Naive thymus-derived CD4-positive, alpha-beta T cell (primary cell): ENCODE measurements at regions of chr16 and their contacts with region 1.

Region 1: DNA sequence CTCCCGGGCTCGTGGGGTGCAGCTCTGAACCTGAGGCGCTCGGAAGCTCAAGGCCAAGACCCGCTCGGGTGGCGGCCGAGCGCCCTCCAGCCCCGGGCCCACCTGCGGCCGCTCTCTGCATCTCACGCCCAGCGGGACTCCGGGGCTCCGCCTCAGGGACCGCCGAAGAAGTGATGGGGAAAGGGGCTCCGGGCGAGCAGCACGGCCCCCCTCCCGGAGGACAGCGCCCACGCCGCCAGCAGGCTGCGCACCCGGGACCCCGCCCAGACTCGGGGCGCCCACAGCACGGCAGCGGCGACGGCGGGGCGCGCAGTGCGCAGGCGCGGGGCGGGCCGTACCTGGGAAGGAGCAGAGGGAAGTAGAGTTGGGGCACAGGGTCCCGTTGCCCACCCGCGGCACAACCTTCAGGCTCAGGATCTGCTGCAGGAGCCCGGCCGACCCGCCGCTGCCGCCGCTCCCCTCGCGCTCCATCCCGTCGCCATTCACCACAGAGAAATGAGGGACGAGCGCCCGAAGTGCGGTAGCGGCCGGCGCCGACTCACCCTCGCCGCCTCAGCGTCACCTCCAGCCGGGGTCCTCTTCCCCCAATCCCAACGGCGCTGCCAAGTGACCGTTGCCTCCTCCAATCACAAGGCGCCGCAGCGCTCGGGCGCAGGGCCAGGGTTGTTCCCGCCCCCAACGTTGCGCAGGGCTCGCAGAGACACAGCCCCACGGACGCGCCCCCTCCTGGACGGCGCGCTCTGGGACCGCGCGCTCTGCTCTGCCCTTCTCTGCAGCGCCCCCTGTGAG is at the start of gene TMEM170A:
- DNase-seq: peak; percentile 96 to 99 (median 99)
- ATAC-seq: peak; percentile 95
- H3K4me3 ChIP-seq: peak within 1 kb of the TSS; percentile 93
- H3K4me3 Mint-ChIP-seq: peak within 1 kb of the TSS; percentile 86 to 98 (median 93)
- H3K27ac ChIP-seq: peak within 1 kb of the TSS; percentile 93
- H3K27ac Mint-ChIP-seq: peak within 1 kb of the TSS; percentile 75 to 97 (median 93)
- H3K4me1 ChIP-seq: peaks cover 26 to 31% of the 10 kb centered on the region in 2 donors
- H3K4me1 Mint-ChIP-seq: peaks cover 31 to 49% (median 44%) of the 10 kb centered on the region in 7 donors
- H3K27me3 ChIP-seq: no peaks in the 10 kb centered on the region
- H3K27me3 Mint-ChIP-seq: peaks cover 0 to 5% (median 0%) of the 10 kb centered on the region in 5 donors
- total RNA-seq, gene TMEM170A: 31.0 to 50.9 (median 46.6) TPM

Region 2: DNA sequence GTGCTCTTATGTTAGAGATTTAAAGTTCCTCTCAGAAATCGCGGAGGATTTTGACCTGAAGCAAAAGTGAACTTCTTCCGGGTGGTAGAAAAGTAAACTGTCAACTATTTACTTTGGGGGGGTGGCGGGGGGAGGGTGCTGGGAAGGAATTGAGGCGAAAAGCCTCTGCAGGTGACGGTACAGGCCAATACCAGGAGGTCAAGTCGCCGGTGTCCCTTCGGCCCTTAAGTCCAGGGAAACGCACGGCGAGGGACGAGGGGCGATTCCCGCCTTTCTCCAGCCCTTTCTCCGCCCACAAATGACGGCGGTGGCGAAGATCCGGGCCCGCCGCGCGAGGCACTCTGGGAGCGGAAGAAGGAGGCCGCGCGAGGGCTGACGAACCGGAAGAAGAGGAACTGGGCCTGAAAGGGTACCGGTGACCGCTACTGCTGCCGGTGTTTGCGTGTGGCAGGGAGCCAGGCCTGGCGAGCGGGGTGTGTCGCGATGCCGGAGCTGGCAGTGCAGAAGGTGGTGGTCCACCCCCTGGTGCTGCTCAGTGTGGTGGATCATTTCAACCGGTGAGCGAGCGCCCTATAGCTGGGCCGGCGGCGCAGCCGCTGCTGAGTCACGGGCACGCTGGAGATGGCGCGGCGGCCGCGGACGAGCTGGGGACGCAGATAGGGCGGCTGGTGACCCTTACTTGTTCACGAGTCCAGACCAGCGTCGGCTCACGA is 1167.7 kb before region 1 on chr16 and contains the start of gene PSMD7:
- CTCF ChIA-PET with region 1: no interaction called
- POLR2A ChIA-PET with region 1: no interaction called
- intact Hi-C with region 1: loop called (anchors 1 to 5 kb)
- DNase-seq: peak; percentile 82 to 93 (median 90)
- ATAC-seq: peak; percentile 96
- H3K4me3 ChIP-seq: peak within 1 kb of the TSS; percentile 86
- H3K4me3 Mint-ChIP-seq: peak within 1 kb of the TSS; percentile 89 to 99 (median 96)
- H3K27ac ChIP-seq: peak within 1 kb of the TSS; percentile 96
- H3K27ac Mint-ChIP-seq: peak within 1 kb of the TSS; percentile 93 to 100 (median 98)
- H3K4me1 ChIP-seq: peaks cover 22 to 25% of the 10 kb centered on the region in 2 donors
- H3K4me1 Mint-ChIP-seq: peaks cover 21 to 52% (median 38%) of the 10 kb centered on the region in 7 donors
- H3K27me3 ChIP-seq: no peaks in the 10 kb centered on the region
- H3K27me3 Mint-ChIP-seq: no peaks in the 10 kb centered on the region
- total RNA-seq, gene PSMD7: 61.1 to 107 (median 71.3) TPM

Region 3: DNA sequence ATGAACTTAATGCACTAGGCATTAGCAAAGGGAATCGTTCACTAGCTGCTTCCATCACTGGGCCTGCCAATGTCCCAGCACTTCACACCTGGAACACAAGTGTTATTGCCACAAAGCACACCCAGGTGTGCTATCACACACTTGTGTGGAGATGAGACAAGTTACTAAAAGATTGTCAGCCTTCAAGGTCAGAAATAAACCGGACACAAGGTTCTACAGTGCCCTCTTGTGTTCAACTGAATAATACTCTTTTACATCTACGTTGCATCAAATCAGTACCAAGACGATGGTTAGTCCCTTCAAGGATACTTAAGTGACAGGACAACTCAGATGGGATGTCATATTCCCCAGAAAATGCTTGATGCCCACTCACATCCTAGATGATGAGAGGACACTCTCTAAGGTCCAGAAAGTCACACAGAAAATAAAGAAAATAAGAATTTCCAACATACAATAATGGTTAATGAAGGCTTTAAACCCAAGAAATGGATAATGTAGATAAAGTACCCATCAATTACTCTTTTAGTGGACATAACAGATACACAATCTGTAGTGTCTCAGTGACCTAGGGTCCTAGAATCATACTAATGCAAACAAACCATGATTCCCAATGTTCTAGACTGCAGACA is 841.0 kb before region 1 on chr16:
- CTCF ChIA-PET with region 1: no interaction called
- POLR2A ChIA-PET with region 1: no interaction called
- intact Hi-C with region 1: no loop called
- DNase-seq: peak in 6 of 9 donors; percentile 29 to 59 (median 53)
- ATAC-seq: peak; percentile 78
- H3K4me3 ChIP-seq: no peak overlapping the region
- H3K4me3 Mint-ChIP-seq: no peak overlapping the region
- H3K27ac ChIP-seq: no peak overlapping the region
- H3K27ac Mint-ChIP-seq: peak overlapping the region in 5 of 9 donors; percentile 20 to 78 (median 49)
- H3K4me1 ChIP-seq: no peaks in the 10 kb centered on the region
- H3K4me1 Mint-ChIP-seq: peaks cover 5 to 18% (median 9%) of the 10 kb centered on the region in 7 donors
- H3K27me3 ChIP-seq: no peaks in the 10 kb centered on the region
- H3K27me3 Mint-ChIP-seq: no peaks in the 10 kb centered on the region

Region 4: GRCh38 chr16:75148311-75149195 is 315.8 kb before region 1 on chr16 and contains the start of gene ZFP1:
- CTCF ChIA-PET with region 1: no interaction called
- POLR2A ChIA-PET with region 1: no interaction called
- intact Hi-C with region 1: loop called in 1 of 2 experiments (anchors 1 kb)
- DNase-seq: peak; percentile 91 to 98 (median 95)
- ATAC-seq: peak; percentile 93
- H3K4me3 ChIP-seq: peak within 1 kb of the TSS; percentile 98
- H3K4me3 Mint-ChIP-seq: peak within 1 kb of the TSS; percentile 85 to 92 (median 89)
- H3K27ac ChIP-seq: peak within 1 kb of the TSS; percentile 89
- H3K27ac Mint-ChIP-seq: peak within 1 kb of the TSS; percentile 66 to 90 (median 86)
- H3K4me1 ChIP-seq: peaks cover 0 to 6% of the 10 kb centered on the region in 2 donors
- H3K4me1 Mint-ChIP-seq: peaks cover 13 to 31% (median 27%) of the 10 kb centered on the region in 7 donors
- H3K27me3 ChIP-seq: no peaks in the 10 kb centered on the region
- H3K27me3 Mint-ChIP-seq: no peaks in the 10 kb centered on the region
- total RNA-seq, gene ZFP1: 8.6 to 13.4 (median 10.1) TPM

Region 5: GRCh38 chr16:75389096-75389690 is 75.1 kb before region 1 on chr16:
- CTCF ChIA-PET with region 1: no interaction called
- POLR2A ChIA-PET with region 1: no interaction called
- intact Hi-C with region 1: no loop called
- DNase-seq: no peak
- ATAC-seq: no peak
- H3K4me3 ChIP-seq: no peak overlapping the region
- H3K4me3 Mint-ChIP-seq: no peak overlapping the region
- H3K27ac ChIP-seq: no peak overlapping the region
- H3K27ac Mint-ChIP-seq: peak overlapping the region in 3 of 9 donors; percentile 41 to 73 (median 51)
- H3K4me1 ChIP-seq: no peaks in the 10 kb centered on the region
- H3K4me1 Mint-ChIP-seq: peaks cover 0 to 3% (median 0%) of the 10 kb centered on the region in 7 donors
- H3K27me3 ChIP-seq: no peaks in the 10 kb centered on the region
- H3K27me3 Mint-ChIP-seq: peaks cover 0 to under 1% (median 0%) of the 10 kb centered on the region in 5 donors

Region 6: GRCh38 chr16:75420987-75421819 is 43.1 kb before region 1 on chr16:
- CTCF ChIA-PET with region 1: no interaction called
- POLR2A ChIA-PET with region 1: no interaction called
- intact Hi-C with region 1: loop called in 1 of 2 experiments (anchors 5 kb)
- DNase-seq: peak in 3 of 9 donors; percentile 10 to 37 (median 21)
- ATAC-seq: peak; percentile 49
- H3K4me3 ChIP-seq: no peak overlapping the region
- H3K4me3 Mint-ChIP-seq: peak overlapping the region; percentile 20 to 75 (median 54)
- H3K27ac ChIP-seq: peak overlapping the region; percentile 35
- H3K27ac Mint-ChIP-seq: peak overlapping the region in 8 of 9 donors; percentile 36 to 83 (median 78)
- H3K4me1 ChIP-seq: peaks cover 0 to 8% of the 10 kb centered on the region in 2 donors
- H3K4me1 Mint-ChIP-seq: peaks cover 19 to 58% (median 51%) of the 10 kb centered on the region in 7 donors
- H3K27me3 ChIP-seq: no peaks in the 10 kb centered on the region
- H3K27me3 Mint-ChIP-seq: no peaks in the 10 kb centered on the region

Region 7: DNA sequence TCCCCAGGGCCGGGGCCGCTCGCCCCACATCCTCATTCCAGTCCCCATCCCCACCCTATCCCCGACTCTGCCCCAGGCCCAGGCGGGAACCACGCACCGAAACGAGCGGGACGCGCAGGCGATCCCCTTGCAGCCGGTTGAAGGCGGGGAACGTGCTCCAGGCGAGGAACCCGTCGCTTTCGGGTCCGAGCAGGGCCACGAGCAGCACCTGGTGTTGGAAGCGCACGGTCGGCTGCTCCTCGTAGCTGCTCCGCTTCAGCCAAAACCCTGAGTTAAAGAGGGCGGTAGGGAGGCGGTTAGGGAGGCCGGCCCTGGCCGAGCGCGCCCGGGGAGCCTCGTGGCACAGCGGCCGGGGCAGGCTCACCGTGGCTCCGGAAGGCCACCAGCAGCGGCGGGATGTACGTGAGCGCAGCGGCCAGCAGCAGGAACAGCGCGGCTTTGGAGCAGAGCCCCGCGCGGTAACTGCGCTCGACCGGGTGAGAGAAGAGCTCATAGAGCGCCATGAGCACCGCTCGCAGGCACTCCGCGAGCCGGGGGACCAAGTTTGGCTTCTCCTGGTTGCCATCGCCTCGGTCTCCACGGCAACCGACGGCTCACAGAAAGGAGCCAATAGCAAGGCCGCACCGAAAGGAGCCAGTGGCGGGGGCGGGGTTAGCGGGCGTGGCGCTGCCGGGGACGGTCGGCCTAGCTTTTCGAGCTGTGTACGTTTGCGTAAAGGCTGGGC is 91.5 kb after region 1 on chr16 and contains the start of gene TMEM231:
- CTCF ChIA-PET with region 1: interaction called, 3 read pairs
- POLR2A ChIA-PET with region 1: interaction called, 3 read pairs
- intact Hi-C with region 1: loop called (anchors 1 to 5 kb)
- DNase-seq: peak; percentile 91 to 97 (median 93)
- ATAC-seq: peak; percentile 98
- H3K4me3 ChIP-seq: peak within 1 kb of the TSS; percentile 84
- H3K4me3 Mint-ChIP-seq: peak within 1 kb of the TSS; percentile 74 to 93 (median 88)
- H3K27ac ChIP-seq: peak within 1 kb of the TSS; percentile 66
- H3K27ac Mint-ChIP-seq: peak within 1 kb of the TSS; percentile 81 to 97 (median 89)
- H3K4me1 ChIP-seq: peaks cover 10% of the 10 kb centered on the region in 2 donors
- H3K4me1 Mint-ChIP-seq: peaks cover 5 to 14% (median 10%) of the 10 kb centered on the region in 7 donors
- H3K27me3 ChIP-seq: no peaks in the 10 kb centered on the region
- H3K27me3 Mint-ChIP-seq: peaks cover 0 to 33% (median 5%) of the 10 kb centered on the region in 5 donors
- total RNA-seq, gene TMEM231: 1.5 to 3.9 (median 3.4) TPM

Region 8: DNA sequence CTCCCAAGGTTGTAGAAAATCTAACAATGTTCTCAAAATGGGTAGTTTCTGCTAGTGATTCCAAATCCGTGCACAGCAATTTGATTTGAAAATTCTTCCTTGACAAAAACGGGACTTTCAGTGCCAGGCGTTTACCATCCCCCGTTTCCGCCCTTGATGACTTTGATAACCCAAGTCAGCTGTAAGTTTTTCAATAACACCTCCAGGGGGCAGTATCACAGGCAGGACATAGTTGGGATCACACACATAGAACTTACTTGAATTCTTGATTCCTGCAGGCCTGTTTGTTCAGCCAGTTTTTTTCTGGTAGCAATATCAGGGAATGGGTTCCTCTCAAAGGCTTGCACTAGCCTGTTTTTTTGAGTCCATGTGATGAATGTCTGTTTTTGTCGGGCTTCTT is 231.4 kb after region 1 on chr16:
- CTCF ChIA-PET with region 1: no interaction called
- POLR2A ChIA-PET with region 1: no interaction called
- intact Hi-C with region 1: no loop called
- DNase-seq: no peak
- ATAC-seq: no peak
- H3K4me3 ChIP-seq: no peak overlapping the region
- H3K4me3 Mint-ChIP-seq: no peak overlapping the region
- H3K27ac ChIP-seq: no peak overlapping the region
- H3K27ac Mint-ChIP-seq: no peak overlapping the region
- H3K4me1 ChIP-seq: no peaks in the 10 kb centered on the region
- H3K4me1 Mint-ChIP-seq: peaks cover 0 to 5% (median 0%) of the 10 kb centered on the region in 7 donors
- H3K27me3 ChIP-seq: no peaks in the 10 kb centered on the region
- H3K27me3 Mint-ChIP-seq: no peaks in the 10 kb centered on the region

Region 9: DNA sequence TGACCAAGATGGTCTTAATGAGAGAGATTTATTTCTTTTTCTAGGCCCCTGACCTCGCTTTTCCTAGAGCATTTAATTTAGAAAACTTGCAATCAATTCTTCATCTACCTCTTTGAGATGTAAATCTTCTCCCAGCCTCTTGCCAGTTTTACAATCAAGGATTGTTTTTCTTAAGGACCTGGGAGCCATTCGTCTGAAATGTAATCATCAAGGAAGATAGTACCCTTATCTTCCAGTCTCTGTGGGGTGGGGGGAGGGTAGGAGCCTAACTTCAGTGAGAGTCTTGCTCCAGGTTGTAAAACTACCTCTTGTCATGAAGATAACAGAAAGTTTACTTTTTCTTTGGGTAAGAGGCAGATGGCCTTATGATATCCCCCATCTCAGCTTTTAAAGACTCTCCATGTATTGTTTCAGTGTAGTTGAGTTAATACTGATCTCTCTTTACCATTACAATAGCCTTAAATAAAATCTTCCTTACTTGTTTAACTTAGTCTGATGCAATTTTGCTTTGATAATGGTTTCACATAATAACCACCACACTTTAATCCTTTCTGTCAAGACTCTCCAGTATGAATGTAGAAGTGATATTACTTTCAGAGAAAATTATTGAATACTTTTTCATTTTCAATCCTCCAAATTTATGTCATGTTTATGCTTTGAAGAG is 372.2 kb after region 1 on chr16:
- CTCF ChIA-PET with region 1: no interaction called
- POLR2A ChIA-PET with region 1: no interaction called
- intact Hi-C with region 1: no loop called
- DNase-seq: no peak
- ATAC-seq: no peak
- H3K4me3 ChIP-seq: no peak overlapping the region
- H3K4me3 Mint-ChIP-seq: no peak overlapping the region
- H3K27ac ChIP-seq: no peak overlapping the region
- H3K27ac Mint-ChIP-seq: no peak overlapping the region
- H3K4me1 ChIP-seq: no peaks in the 10 kb centered on the region
- H3K4me1 Mint-ChIP-seq: no peaks in the 10 kb centered on the region
- H3K27me3 ChIP-seq: no peaks in the 10 kb centered on the region
- H3K27me3 Mint-ChIP-seq: peaks cover 0 to 61% (median 33%) of the 10 kb centered on the region in 5 donors

Region 10: DNA sequence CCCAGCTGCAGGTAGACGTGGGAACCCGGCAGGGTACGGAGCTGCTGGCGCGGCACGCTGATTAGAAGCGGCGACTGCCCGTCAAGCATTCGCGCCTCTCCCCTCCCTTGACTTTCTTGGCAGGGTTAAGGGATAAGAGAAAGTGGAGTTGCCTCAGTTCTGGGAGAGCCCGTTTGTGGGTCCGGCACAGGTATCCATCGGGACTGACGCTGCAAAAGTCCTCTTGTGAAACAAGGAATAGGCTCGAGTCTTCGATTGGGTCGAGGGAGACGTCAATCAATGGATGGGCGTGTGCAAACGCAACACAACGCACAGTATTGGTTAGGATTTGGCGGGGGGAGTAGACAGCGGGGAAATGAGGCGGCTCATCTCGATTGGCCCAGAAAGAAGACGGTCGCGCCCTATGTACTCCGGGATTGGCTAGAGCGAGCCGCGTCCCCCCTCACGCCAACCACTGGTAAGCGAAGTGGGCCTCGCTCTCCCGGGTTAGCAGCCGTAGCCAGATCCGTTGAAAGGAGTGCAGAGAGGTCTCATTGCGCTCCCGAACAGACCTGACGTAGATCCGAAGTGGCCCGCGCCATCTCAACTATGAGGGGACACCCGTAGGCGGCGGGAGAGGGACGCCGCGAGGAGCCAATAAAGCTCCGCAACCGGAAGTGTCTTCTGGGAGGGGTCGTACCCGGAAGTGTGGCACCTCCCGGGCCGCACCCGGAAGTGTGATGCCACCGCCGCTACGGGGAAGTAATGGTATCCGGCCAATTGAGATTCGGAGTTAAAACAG is 1726.3 kb after region 1 on chr16 and contains the start of gene MON1B:
- CTCF ChIA-PET with region 1: no interaction called
- POLR2A ChIA-PET with region 1: no interaction called
- intact Hi-C with region 1: loop called (anchors 2 to 5 kb)
- DNase-seq: peak; percentile 86 to 98 (median 97)
- ATAC-seq: peak; percentile 96
- H3K4me3 ChIP-seq: peak within 1 kb of the TSS; percentile 97
- H3K4me3 Mint-ChIP-seq: peak within 1 kb of the TSS; percentile 90 to 99 (median 96)
- H3K27ac ChIP-seq: peak within 1 kb of the TSS; percentile 86
- H3K27ac Mint-ChIP-seq: peak within 1 kb of the TSS; percentile 98 to 100 (median 100)
- H3K4me1 ChIP-seq: peaks cover 13 to 23% of the 10 kb centered on the region in 2 donors
- H3K4me1 Mint-ChIP-seq: peaks cover 36 to 55% (median 46%) of the 10 kb centered on the region in 7 donors
- H3K27me3 ChIP-seq: no peaks in the 10 kb centered on the region
- H3K27me3 Mint-ChIP-seq: peaks cover 0 to 10% (median 4%) of the 10 kb centered on the region in 5 donors
- total RNA-seq, gene MON1B: 60.8 to 87.2 (median 67.3) TPM